AG04449 (cell line): ENCODE measurements at regions of chr22 and their contacts with region 1.

Region 1: GRCh38 chr22:42990139-42990767 is 24.7 kb downstream of the PACSIN2 start:
- DNase-seq: peak; percentile 63
- H3K4me3 ChIP-seq: no peak overlapping the region
- CTCF ChIP-seq: peak; percentile 60

Region 2: GRCh38 chr22:42939941-42940653 is 50.2 kb before region 1 on chr22:
- CTCF ChIA-PET with region 1: no interaction called
- POLR2A ChIA-PET with region 1: no interaction called
- DNase-seq: peak; percentile 45
- H3K4me3 ChIP-seq: no peak overlapping the region
- CTCF ChIP-seq: no peak

Region 3: GRCh38 chr22:43001271-43002201 is 11.3 kb after region 1 on chr22:
- CTCF ChIA-PET with region 1: interaction called, 23 read pairs
- POLR2A ChIA-PET with region 1: interaction called, 8 read pairs
- DNase-seq: no peak
- H3K4me3 ChIP-seq: peak overlapping the region; percentile 38
- CTCF ChIP-seq: no peak

Region 4: DNA sequence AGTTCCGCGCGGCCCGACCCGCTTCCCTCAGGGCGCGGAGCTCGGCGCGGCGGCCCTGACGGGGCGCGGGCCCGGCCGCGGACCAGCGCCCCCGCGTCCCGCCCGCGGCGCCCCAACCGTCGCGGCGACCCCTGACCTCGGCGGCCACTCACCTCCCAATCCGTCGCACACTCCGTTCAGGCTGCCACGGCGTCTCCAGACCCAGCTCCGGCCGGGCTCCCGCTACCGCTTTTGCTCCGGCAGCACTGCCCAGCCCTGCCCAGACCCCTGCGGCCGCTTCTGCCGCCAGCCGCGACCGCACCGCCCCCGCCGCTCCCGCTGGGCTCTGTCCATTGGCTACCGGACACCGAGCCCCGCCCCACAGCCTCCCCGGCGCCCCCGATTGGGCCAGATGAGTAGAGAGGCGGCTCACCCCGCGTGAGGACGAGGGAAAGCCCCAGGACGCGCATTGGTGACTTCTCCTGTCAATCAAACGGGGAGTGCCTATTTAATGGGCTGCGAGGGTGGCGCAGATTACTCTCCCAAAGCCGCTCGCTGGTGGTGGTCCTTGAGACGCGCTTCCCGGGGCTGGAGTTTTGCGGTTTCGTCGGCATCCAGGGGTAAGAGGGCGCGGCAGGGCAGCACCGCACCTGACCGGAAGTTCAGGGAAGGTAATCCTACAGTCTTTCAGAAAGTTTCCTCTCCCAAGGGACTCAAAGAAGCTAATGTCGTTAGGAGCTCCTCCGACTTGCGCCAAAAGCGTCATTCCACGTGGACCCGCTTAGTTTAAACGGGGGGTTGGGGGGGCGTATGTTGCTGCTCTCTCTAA is 24.8 kb after region 1 on chr22 and contains the start of gene PACSIN2:
- CTCF ChIA-PET with region 1: interaction called, 13 read pairs
- POLR2A ChIA-PET with region 1: interaction called, 25 read pairs
- DNase-seq: peak; percentile 88
- H3K4me3 ChIP-seq: peak within 1 kb of the TSS; percentile 83
- CTCF ChIP-seq: no peak

Region 5: GRCh38 chr22:43036282-43036829 is 46.1 kb after region 1 on chr22:
- CTCF ChIA-PET with region 1: interaction called, 15 read pairs
- POLR2A ChIA-PET with region 1: no interaction called
- DNase-seq: peak; percentile 23
- H3K4me3 ChIP-seq: no peak overlapping the region
- CTCF ChIP-seq: no peak

Region 6: DNA sequence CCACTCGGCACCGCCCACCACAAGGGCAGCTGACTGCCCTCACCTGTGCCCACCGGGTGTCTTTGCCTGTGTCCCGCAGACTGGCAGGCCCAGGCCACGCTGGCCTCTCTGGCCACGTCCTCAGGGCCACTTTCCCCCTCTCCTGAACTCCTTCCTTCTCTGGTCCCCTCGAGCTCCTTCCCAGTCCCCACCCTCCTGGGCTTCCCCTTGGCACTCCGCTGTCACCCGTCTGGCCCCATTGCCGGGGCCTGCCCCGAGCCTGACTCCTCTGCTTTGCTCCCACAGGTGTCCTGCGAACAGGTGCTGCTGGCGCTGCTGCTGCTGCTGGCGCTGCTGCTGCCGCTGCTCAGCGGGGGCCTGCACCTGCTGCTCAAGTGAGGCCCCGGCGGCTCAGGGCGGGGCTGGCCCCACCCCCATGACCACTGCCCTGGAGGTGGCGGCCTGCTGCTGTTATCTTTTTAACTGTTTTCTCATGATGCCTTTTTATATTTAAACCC is 138.7 kb after region 1 on chr22:
- CTCF ChIA-PET with region 1: no interaction called
- POLR2A ChIA-PET with region 1: no interaction called
- DNase-seq: no peak
- H3K4me3 ChIP-seq: no peak overlapping the region
- CTCF ChIP-seq: no peak